IMR-90 (cell line): ENCODE measurements at regions of chrX and their contacts with region 1.

Region 1: GRCh38 chrX:129606918-129607317 is 47.8 kb downstream of the APLN start:
- DNase-seq: peak; percentile 36
- ATAC-seq: peak; percentile 74
- H3K4me3 ChIP-seq: no peak overlapping the region
- H3K27ac ChIP-seq: no peak overlapping the region
- H3K4me1 ChIP-seq: peaks cover 2% of the 10 kb centered on the region; the same call in 1 of the 2 replicates
- H3K27me3 ChIP-seq: peaks cover 3% of the 10 kb centered on the region; the same call in 1 of the 2 replicates
- CTCF ChIP-seq: peak; percentile 73
- POLR2A ChIP-seq: no peak
- RAD21 ChIP-seq: peak; percentile 83

Region 2: GRCh38 chrX:129404430-129405008 is 202.4 kb before region 1 on chrX:
- CTCF ChIA-PET with region 1: no interaction called
- POLR2A ChIA-PET with region 1: no interaction called
- dilution Hi-C with region 1: no loop called
- in situ Hi-C with region 1: no loop called
- intact Hi-C with region 1: no loop called
- DNase-seq: no peak
- ATAC-seq: no peak
- H3K4me3 ChIP-seq: no peak overlapping the region
- H3K27ac ChIP-seq: no peak overlapping the region
- H3K4me1 ChIP-seq: no peaks in the 10 kb centered on the region
- H3K27me3 ChIP-seq: no peaks in the 10 kb centered on the region
- CTCF ChIP-seq: no peak
- POLR2A ChIP-seq: no peak
- RAD21 ChIP-seq: no peak

Region 3: DNA sequence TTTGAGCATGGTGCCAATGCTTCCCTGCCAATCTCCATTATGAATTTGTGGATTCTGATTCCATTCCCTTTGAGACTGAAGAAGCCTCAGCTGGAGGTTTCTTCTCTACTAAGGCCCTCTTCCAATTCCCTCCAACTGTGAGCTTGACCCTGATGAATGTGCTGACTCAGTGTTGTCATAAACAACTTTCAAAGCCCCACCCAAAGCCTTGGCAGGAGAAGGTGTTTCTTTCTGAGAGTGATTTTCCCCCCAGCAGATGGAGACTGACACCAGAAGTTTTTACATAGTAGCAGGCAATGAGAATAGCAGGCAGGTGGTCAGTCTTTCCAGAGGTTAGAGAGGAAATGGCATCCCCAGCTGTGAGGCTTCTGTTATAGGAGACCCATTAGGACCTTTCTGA is 13.8 kb before region 1 on chrX:
- CTCF ChIA-PET with region 1: no interaction called
- POLR2A ChIA-PET with region 1: no interaction called
- dilution Hi-C with region 1: no loop called
- in situ Hi-C with region 1: no loop called
- intact Hi-C with region 1: no loop called
- DNase-seq: peak; percentile 37
- ATAC-seq: peak; percentile 67
- H3K4me3 ChIP-seq: no peak overlapping the region
- H3K27ac ChIP-seq: no peak overlapping the region; the same call in 1 of the 2 replicates
- H3K4me1 ChIP-seq: peaks cover 3% of the 10 kb centered on the region; the same call in 1 of the 2 replicates
- H3K27me3 ChIP-seq: peaks cover 2% of the 10 kb centered on the region; the same call in 1 of the 2 replicates
- CTCF ChIP-seq: no peak
- POLR2A ChIP-seq: no peak
- RAD21 ChIP-seq: no peak

Region 4: DNA sequence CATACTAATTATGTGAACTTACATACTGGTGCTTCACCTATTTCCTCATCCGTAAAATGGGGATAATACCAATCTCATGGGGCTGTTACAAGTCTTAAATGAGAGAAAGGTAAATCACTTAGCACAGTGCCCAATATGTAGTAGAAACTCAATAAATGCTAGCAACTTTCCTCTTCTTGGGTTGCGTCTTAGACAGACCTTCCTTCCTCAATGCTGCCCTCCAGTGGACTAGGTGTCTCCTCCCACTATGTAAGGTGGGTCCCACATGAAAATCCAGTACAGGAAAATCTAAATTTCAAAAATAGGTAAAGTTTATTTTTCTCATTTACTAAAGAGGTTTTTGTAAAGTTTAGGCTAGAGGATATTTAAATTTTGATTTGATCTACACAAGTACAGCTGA is 216.2 kb after region 1 on chrX:
- CTCF ChIA-PET with region 1: no interaction called
- POLR2A ChIA-PET with region 1: no interaction called
- dilution Hi-C with region 1: no loop called
- in situ Hi-C with region 1: no loop called
- intact Hi-C with region 1: loop called (anchors 5 kb)
- DNase-seq: peak; percentile 15
- ATAC-seq: no peak
- H3K4me3 ChIP-seq: no peak overlapping the region
- H3K27ac ChIP-seq: no peak overlapping the region
- H3K4me1 ChIP-seq: peaks cover 2% of the 10 kb centered on the region; the same call in 1 of the 2 replicates
- H3K27me3 ChIP-seq: no peaks in the 10 kb centered on the region; the same call in 1 of the 2 replicates
- CTCF ChIP-seq: peak; percentile 38
- POLR2A ChIP-seq: no peak
- RAD21 ChIP-seq: peak; percentile 41

Region 5: GRCh38 chrX:129843459-129844306 is 236.8 kb after region 1 on chrX and contains the start of gene ZDHHC9:
- CTCF ChIA-PET with region 1: no interaction called
- POLR2A ChIA-PET with region 1: no interaction called
- dilution Hi-C with region 1: no loop called
- in situ Hi-C with region 1: no loop called
- intact Hi-C with region 1: no loop called
- DNase-seq: peak; percentile 85
- ATAC-seq: peak; percentile 98
- H3K4me3 ChIP-seq: peak within 1 kb of the TSS; percentile 70
- H3K27ac ChIP-seq: peak within 1 kb of the TSS; percentile 45
- H3K4me1 ChIP-seq: no peaks in the 10 kb centered on the region
- H3K27me3 ChIP-seq: peaks cover 8% of the 10 kb centered on the region
- CTCF ChIP-seq: no peak
- POLR2A ChIP-seq: 0 out of 2 replicates have a peak, but pooled peaks have one; percentile 66
- RAD21 ChIP-seq: no peak
- total RNA-seq, gene ZDHHC9: 14.2 and 17.7 TPM in 2 replicates

Region 6: DNA sequence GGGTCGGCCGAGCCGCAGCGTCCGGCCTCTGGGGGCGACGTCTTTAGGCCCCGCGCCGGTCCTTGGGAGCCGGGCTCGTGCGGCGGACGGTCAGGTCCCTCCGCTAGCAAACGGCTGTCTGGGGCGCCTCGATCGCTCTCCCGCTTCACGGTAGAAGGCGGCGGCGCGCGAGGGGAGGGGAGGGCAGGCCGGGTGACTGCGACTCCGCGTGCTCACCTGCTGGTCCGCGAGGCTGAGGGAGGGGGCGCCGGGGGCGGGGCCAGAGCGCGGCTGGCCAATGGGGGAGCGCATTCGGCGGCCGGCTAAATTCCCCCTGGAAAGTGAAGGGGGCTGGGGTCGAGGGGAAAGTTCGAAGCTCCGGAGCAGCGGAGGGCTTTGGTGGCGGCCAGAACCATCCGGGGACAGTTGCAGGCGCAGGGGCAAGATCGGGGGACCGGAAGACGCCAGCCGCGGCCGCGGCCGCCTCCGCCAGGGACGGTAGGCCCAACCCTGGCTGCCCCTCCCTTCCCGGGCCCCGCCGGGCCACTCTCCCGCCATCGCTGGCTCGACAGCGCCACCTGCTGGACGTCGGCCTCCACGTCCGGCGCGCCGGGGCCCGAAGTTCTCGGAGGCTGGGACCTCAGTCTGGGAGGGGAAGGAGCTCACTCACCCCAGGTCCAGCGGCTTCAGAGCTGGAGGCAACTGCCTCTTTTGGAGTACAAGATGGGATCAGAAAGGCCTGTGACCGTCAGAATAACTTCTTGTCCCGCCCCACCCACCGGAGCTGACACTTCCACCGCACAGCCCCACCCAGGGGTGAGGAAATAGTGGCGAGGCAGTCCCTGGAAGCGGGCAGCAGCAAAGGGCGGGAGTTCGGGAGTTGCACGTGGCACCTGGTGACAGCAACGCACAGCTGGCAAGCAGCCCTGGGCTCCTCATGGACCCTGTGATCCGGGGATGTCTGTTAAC is 453.5 kb after region 1 on chrX:
- CTCF ChIA-PET with region 1: no interaction called
- POLR2A ChIA-PET with region 1: no interaction called
- dilution Hi-C with region 1: no loop called
- in situ Hi-C with region 1: loop called (anchors 10 kb)
- intact Hi-C with region 1: loop called (anchors 1 kb)
- DNase-seq: peak; percentile 37
- ATAC-seq: peak; percentile 91
- H3K4me3 ChIP-seq: peak overlapping the region; percentile 76
- H3K27ac ChIP-seq: peak overlapping the region; percentile 38; the same call in 1 of the 2 replicates
- H3K4me1 ChIP-seq: peaks cover 1% of the 10 kb centered on the region; the same call in 1 of the 2 replicates
- H3K27me3 ChIP-seq: no peaks in the 10 kb centered on the region; the same call in 1 of the 2 replicates
- CTCF ChIP-seq: peak; percentile 80
- POLR2A ChIP-seq: no peak
- RAD21 ChIP-seq: peak; percentile 75

Region 7: DNA sequence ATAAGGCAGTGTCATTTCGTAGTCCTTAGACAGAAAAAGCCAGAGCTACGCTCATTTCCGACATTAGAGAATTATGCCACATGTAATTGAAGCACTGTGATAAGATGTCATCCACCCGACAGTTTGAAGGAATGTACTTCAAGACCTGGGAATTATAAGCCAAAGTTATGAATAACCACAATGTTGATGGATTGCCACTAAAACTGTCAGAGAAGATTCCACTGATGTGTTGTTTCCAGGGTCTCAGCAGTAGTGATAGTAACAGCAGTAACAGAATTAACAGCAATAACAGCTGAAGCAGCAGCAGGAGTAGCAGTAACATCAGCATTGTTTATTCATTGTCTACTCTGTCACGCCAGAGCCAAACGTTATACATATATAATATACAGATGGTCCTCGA is 589.5 kb after region 1 on chrX:
- CTCF ChIA-PET with region 1: no interaction called
- POLR2A ChIA-PET with region 1: no interaction called
- dilution Hi-C with region 1: no loop called
- in situ Hi-C with region 1: loop called (anchors 25 kb)
- intact Hi-C with region 1: loop called (anchors 1 kb)
- DNase-seq: no peak
- ATAC-seq: no peak
- H3K4me3 ChIP-seq: no peak overlapping the region
- H3K27ac ChIP-seq: no peak overlapping the region
- H3K4me1 ChIP-seq: no peaks in the 10 kb centered on the region
- H3K27me3 ChIP-seq: no peaks in the 10 kb centered on the region; the same call in 1 of the 2 replicates
- CTCF ChIP-seq: no peak
- POLR2A ChIP-seq: no peak
- RAD21 ChIP-seq: no peak

Region 8: GRCh38 chrX:130916636-130917422 is 1309.9 kb after region 1 on chrX:
- CTCF ChIA-PET with region 1: no interaction called
- POLR2A ChIA-PET with region 1: no interaction called
- dilution Hi-C with region 1: no loop called
- in situ Hi-C with region 1: loop called (anchors 25 kb)
- intact Hi-C with region 1: loop called (anchors 5 kb)
- DNase-seq: peak; percentile 54
- ATAC-seq: peak; percentile 75
- H3K4me3 ChIP-seq: no peak overlapping the region
- H3K27ac ChIP-seq: no peak overlapping the region
- H3K4me1 ChIP-seq: no peaks in the 10 kb centered on the region
- H3K27me3 ChIP-seq: peaks cover 2% of the 10 kb centered on the region; the same call in 1 of the 2 replicates
- CTCF ChIP-seq: peak; percentile 80
- POLR2A ChIP-seq: no peak
- RAD21 ChIP-seq: peak; percentile 91